ENCODE measurements at regions of chr10 and their contacts with region 1.

Region 1: DNA sequence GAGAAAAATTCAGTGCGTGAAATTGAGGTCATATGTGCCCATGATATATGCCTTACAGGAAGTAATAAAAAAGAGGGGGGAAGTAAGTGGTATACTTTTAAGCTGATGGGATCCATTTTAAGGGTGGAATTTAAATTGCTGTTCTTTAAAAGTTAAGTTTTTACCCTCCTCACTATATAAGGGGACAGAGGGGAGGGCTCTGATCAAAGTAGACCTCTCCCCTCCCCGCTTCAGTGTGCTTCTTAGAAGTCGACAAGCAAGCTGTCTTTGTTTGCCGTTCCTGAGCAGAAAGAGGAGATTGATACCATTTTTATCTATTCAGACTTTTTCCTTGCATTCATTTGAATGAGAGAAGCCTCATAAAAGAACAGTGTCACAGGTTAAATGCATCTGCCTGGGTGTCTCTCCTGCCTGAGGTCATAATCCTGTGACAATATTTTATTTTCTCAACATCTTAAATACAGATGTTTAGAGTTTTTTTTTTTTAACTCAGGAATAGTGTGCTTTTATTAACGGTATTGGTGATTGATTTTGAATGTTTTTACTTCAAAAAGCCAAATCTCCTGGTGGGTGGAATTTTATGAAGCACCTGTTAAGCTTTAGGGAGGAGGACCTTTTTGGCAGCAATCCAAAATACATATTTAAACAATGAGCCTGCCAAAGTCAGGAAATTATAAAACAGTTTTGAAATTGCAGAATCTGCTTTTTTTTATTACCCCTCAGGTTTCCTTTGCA is 141.7 kb downstream of the KAT6B start:
- DNase-seq: no peak
- ATAC-seq: no peak
- H3K4me3 ChIP-seq: no peak overlapping the region
- H3K27ac ChIP-seq: no peak overlapping the region
- H3K4me1 ChIP-seq: peaks cover 2% of the 10 kb centered on the region; the same call in 1 of the 2 replicates
- H3K27me3 ChIP-seq: no peaks in the 10 kb centered on the region
- CTCF ChIP-seq: no peak
- POLR2A ChIP-seq: no peak
- RAD21 ChIP-seq: no peak

Region 2: DNA sequence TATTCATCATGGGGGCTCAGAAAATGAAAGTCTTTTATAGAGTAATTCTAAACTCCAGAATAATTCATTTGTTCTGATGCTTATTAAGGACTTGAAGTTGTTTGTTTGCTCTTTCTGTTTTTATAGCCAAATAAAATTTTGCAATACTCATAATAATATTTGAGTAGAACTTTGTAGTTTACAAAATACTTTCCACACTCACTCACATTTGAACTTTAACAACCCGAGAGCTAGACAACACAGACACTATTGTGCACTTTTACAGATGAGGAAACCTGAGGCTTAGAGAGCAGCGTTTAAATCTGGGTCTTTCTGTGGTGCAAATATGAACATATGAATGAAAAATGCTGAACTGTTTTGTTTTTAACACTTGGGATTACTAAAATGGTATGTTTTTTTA is 14.9 kb before region 1 on chr10:
- CTCF ChIA-PET with region 1: interaction called, 3 read pairs
- POLR2A ChIA-PET with region 1: no interaction called
- dilution Hi-C with region 1: no loop called
- in situ Hi-C with region 1: no loop called
- intact Hi-C with region 1: loop called (anchors 2 kb)
- DNase-seq: no peak
- ATAC-seq: no peak
- H3K4me3 ChIP-seq: no peak overlapping the region
- H3K27ac ChIP-seq: no peak overlapping the region
- H3K4me1 ChIP-seq: peaks cover 8% of the 10 kb centered on the region
- H3K27me3 ChIP-seq: no peaks in the 10 kb centered on the region
- CTCF ChIP-seq: no peak
- POLR2A ChIP-seq: no peak
- RAD21 ChIP-seq: no peak

Region 3: DNA sequence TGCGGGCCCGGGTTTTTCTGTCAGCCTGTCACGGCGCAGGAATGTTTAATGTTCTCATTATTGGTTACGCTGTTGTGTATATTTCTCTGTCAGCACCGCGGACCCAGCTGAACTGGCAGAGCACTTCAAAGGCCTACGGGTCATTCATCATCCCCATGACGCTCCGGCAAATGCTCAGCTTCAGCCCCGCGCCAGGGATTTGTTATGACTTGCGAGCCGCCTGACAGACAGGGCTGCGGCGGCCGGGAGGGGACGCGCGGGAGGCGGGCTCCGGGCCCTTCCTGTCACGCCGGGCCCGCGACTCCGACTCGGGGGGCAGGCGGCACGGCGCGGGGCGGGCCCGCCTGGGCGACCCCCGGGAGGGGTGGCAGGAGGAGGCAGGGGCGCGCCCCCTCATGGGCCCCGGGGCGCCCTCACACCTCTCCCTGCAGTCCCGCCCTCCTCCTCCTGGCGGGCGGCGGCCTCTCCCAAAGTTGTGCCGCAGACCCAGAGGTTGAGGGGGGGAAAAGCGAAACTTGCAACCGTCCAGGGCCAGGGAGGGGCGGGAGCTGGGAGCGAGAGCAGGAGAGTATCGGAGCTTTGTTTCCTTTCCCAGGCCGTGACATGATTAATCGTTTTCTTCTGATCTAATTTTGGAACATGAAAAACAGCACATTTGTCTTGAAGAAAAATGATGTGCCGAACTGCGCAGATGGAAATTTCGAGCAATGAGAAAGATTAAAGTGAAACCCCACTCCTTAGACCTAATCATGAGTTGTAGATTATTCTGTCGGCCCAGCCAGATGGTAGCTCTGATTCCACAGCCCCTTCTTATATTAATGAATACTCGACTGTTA is 327.0 kb after region 1 on chr10:
- CTCF ChIA-PET with region 1: no interaction called
- POLR2A ChIA-PET with region 1: no interaction called
- dilution Hi-C with region 1: no loop called
- in situ Hi-C with region 1: no loop called
- intact Hi-C with region 1: no loop called
- DNase-seq: peak; percentile 93
- ATAC-seq: peak; percentile 78
- H3K4me3 ChIP-seq: peak overlapping the region; percentile 32
- H3K27ac ChIP-seq: peak overlapping the region; percentile 18
- H3K4me1 ChIP-seq: peaks cover 24% of the 10 kb centered on the region
- H3K27me3 ChIP-seq: no peaks in the 10 kb centered on the region; the same call in 1 of the 2 replicates
- CTCF ChIP-seq: peak; percentile 18; the same call in 1 of the 2 replicates
- POLR2A ChIP-seq: no peak
- RAD21 ChIP-seq: peak; percentile 16; the same call in 1 of the 2 replicates

Measured in IMR-90 (cell line).